ENCODE measurements at regions of chr1 and their contacts with region 1.

Region 1: GRCh38 chr1:184892116-184892515 is 82.2 kb downstream of the NIBAN1 start:
- DNase-seq: peak in 2 of 9 experiments; percentile 44 to 60
- ATAC-seq: peak; percentile 29
- H3K4me3 ChIP-seq: no peak overlapping the region
- H3K4me3 Mint-ChIP-seq: no peak overlapping the region
- H3K27ac ChIP-seq: peak overlapping the region in 1 of 2 experiments; percentile 90
- H3K27ac Mint-ChIP-seq: peak overlapping the region; percentile 76
- H3K4me1 ChIP-seq: no peaks in the 10 kb centered on the region
- H3K4me1 Mint-ChIP-seq: peaks cover 23% of the 10 kb centered on the region
- H3K27me3 ChIP-seq: no peaks in the 10 kb centered on the region
- H3K27me3 Mint-ChIP-seq: no peaks in the 10 kb centered on the region
- CTCF ChIP-seq: no peak

Region 2: DNA sequence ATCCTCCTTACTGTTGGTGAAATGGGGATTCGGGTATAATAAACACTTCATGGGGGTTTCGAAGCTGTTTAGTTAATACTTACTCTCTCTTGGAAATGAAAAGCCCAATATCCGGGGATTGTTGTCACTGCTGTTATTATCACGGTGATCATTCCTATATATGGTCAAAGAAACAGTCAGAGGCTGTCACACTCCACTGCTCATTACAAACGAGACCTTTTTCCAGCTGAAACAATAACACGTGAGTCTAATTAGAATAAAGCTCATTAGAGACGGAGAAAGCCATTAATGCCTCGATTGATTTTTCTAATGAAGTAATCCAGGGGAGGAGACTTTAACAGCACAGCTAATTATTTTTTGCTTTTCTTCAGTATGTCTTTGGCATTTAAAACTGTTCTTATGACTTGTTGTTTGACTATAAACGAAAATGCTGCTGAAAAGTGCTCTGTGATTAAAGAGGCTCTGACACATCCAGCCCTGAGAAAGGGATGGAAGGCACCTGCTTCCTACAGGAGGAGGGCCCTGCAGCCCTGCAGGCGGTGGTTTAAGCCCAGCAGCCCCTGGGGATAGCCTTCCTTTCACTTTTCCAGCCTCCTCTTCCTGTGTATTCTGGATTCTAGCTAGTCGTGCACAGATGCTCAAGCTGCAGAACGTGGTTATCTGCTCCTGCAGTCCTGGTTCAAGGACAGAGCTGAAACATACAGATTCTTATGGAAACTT is 281.1 kb before region 1 on chr1:
- CTCF ChIA-PET with region 1: no interaction called
- POLR2A ChIA-PET with region 1: no interaction called
- intact Hi-C with region 1: no loop called
- DNase-seq: no peak
- ATAC-seq: no peak
- H3K4me3 ChIP-seq: no peak overlapping the region
- H3K4me3 Mint-ChIP-seq: no peak overlapping the region
- H3K27ac ChIP-seq: no peak overlapping the region
- H3K27ac Mint-ChIP-seq: no peak overlapping the region
- H3K4me1 ChIP-seq: no peaks in the 10 kb centered on the region
- H3K4me1 Mint-ChIP-seq: no peaks in the 10 kb centered on the region
- H3K27me3 ChIP-seq: no peaks in the 10 kb centered on the region
- H3K27me3 Mint-ChIP-seq: no peaks in the 10 kb centered on the region
- CTCF ChIP-seq: no peak

Region 3: GRCh38 chr1:184843732-184844495 is 48.2 kb before region 1 on chr1:
- CTCF ChIA-PET with region 1: no interaction called
- POLR2A ChIA-PET with region 1: no interaction called
- intact Hi-C with region 1: loop called in 1 of 2 experiments (anchors 5 kb)
- DNase-seq: peak; percentile 52 to 91 (median 74)
- ATAC-seq: peak; percentile 52
- H3K4me3 ChIP-seq: no peak overlapping the region
- H3K4me3 Mint-ChIP-seq: no peak overlapping the region
- H3K27ac ChIP-seq: peak overlapping the region in 1 of 2 experiments; percentile 64
- H3K27ac Mint-ChIP-seq: peak overlapping the region; percentile 72
- H3K4me1 ChIP-seq: peaks cover 17% of the 10 kb centered on the region
- H3K4me1 Mint-ChIP-seq: peaks cover 30% of the 10 kb centered on the region
- H3K27me3 ChIP-seq: no peaks in the 10 kb centered on the region
- H3K27me3 Mint-ChIP-seq: no peaks in the 10 kb centered on the region
- CTCF ChIP-seq: no peak

Region 4: GRCh38 chr1:184854036-184854435 is 38.1 kb before region 1 on chr1:
- CTCF ChIA-PET with region 1: no interaction called
- POLR2A ChIA-PET with region 1: no interaction called
- intact Hi-C with region 1: no loop called
- DNase-seq: no peak
- ATAC-seq: no peak
- H3K4me3 ChIP-seq: no peak overlapping the region
- H3K4me3 Mint-ChIP-seq: no peak overlapping the region
- H3K27ac ChIP-seq: no peak overlapping the region
- H3K27ac Mint-ChIP-seq: no peak overlapping the region
- H3K4me1 ChIP-seq: no peaks in the 10 kb centered on the region
- H3K4me1 Mint-ChIP-seq: no peaks in the 10 kb centered on the region
- H3K27me3 ChIP-seq: no peaks in the 10 kb centered on the region
- H3K27me3 Mint-ChIP-seq: no peaks in the 10 kb centered on the region
- CTCF ChIP-seq: no peak

Region 5: DNA sequence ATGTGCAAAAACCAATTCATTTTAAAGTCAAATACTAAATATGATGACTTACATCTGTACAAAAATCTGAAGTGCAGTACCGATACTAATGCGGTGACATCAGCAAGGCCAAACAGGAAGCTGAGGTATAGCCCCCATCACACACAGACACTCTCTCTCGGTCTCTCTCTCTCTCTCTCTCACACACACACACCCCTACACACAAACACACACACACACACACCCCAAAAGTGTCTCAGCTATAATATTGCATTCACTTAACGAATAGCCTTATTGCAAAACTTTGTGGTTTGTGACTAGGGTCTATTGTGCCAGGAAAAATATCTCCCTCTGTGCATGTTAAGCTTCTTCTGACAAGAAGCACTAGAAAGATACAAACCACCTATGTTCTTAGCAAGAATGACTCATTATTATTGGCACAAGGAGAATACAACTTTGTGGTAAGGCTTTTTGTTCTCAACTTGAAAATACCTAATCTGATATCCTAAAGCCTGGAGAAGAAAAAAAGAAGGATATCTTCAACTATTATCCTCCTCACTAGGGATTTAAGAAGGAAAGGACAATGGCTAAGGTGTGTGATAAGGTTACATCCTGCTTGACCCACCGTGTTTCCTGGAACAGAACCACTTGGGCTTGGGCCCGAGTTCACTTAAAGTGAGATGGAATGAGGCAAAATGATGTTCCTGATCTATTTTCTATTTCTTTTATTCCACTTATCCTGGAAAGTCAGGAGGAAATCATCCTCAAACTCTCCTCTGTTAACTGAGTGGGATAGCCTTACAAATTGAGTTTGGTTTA is 24.9 kb before region 1 on chr1:
- CTCF ChIA-PET with region 1: no interaction called
- POLR2A ChIA-PET with region 1: interaction called, 7 read pairs
- intact Hi-C with region 1: loop called in 1 of 2 experiments (anchors 1 kb)
- DNase-seq: peak; percentile 14 to 88 (median 63)
- ATAC-seq: peak; percentile 83
- H3K4me3 ChIP-seq: no peak overlapping the region
- H3K4me3 Mint-ChIP-seq: peak overlapping the region; percentile 6
- H3K27ac ChIP-seq: peak overlapping the region; percentile 19 to 71
- H3K27ac Mint-ChIP-seq: peak overlapping the region; percentile 81
- H3K4me1 ChIP-seq: peaks cover 18% of the 10 kb centered on the region
- H3K4me1 Mint-ChIP-seq: peaks cover 36% of the 10 kb centered on the region
- H3K27me3 ChIP-seq: no peaks in the 10 kb centered on the region
- H3K27me3 Mint-ChIP-seq: no peaks in the 10 kb centered on the region
- CTCF ChIP-seq: no peak

Region 6: GRCh38 chr1:184973272-184974055 is 81.3 kb after region 1 on chr1:
- CTCF ChIA-PET with region 1: no interaction called
- POLR2A ChIA-PET with region 1: no interaction called
- intact Hi-C with region 1: loop called (anchors 2 to 5 kb)
- DNase-seq: peak in 8 of 9 experiments; percentile 2 to 89 (median 34)
- ATAC-seq: peak; percentile 48
- H3K4me3 ChIP-seq: peak overlapping the region; percentile 65 to 93
- H3K4me3 Mint-ChIP-seq: peak overlapping the region; percentile 96
- H3K27ac ChIP-seq: peak overlapping the region; percentile 52 to 82
- H3K27ac Mint-ChIP-seq: peak overlapping the region; percentile 89
- H3K4me1 ChIP-seq: peaks cover 14% of the 10 kb centered on the region
- H3K4me1 Mint-ChIP-seq: peaks cover 51% of the 10 kb centered on the region
- H3K27me3 ChIP-seq: no peaks in the 10 kb centered on the region
- H3K27me3 Mint-ChIP-seq: peaks cover 26% of the 10 kb centered on the region
- CTCF ChIP-seq: no peak